Esophagus muscularis mucosa (tissue), 4 donors: ENCODE measurements at regions of chr18 and their contacts with region 1.

Region 1: DNA sequence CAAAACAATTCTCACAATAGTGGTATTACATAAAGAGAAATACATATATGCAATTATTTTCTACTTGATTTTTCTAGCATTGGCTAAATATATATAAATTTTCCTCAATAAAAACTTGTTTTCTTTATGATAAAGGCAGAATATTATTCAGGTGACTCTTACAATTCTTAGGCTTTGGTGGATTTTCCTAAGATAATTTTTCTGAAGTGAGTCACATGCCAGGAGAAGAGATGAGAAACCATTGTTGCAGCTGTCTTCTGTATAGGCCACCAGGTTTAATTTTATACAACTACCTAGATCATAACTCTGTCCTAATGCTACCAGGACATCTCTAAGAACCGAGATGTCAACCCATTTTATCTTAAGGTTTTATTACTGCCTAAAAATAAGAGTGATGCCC is 552.4 kb upstream of the CDH2 start:
- DNase-seq: no peak
- H3K4me3 ChIP-seq: no peak overlapping the region
- H3K27ac ChIP-seq: no peak overlapping the region
- H3K4me1 ChIP-seq: no peaks in the 10 kb centered on the region
- H3K27me3 ChIP-seq: no peaks in the 10 kb centered on the region
- CTCF ChIP-seq: no peak
- EP300 ChIP-seq: no peak
- POLR2A ChIP-seq: no peak

Region 2: DNA sequence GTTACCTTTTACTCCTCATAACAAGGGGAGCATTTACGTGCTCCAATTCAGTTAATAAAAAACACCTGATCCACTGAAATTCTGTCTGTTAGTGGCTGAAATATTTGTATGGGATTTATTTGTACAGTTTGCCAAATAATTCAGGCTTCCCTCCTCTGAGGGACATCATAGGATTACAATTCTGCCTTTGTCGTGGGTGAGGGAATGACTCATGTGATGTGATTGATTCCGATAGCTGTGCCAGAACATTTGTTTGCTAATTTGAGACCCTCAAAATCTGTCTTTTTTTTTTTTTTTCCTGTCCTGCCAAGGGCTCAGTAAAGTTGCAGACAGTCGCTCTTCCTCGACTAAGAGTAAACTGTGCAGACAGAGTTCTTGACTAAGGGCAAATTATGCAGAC is 60.2 kb after region 1 on chr18:
- intact Hi-C with region 1: loop called (anchors 10 kb)
- DNase-seq: no peak
- H3K4me3 ChIP-seq: no peak overlapping the region
- H3K27ac ChIP-seq: no peak overlapping the region
- H3K4me1 ChIP-seq: no peaks in the 10 kb centered on the region
- H3K27me3 ChIP-seq: no peaks in the 10 kb centered on the region
- CTCF ChIP-seq: no peak
- EP300 ChIP-seq: no peak
- POLR2A ChIP-seq: no peak